ENCODE measurements at regions of chr1 and their contacts with region 1.

Region 1: GRCh38 chr1:205387845-205388244 is 31.1 kb upstream of the KLHDC8A start:
- DNase-seq: no peak

Region 2: GRCh38 chr1:205430696-205431305 is 43.0 kb after region 1 on chr1:
- intact Hi-C with region 1: loop called in 1 of 2 experiments (anchors 1 kb)
- DNase-seq: no peak

Region 3: DNA sequence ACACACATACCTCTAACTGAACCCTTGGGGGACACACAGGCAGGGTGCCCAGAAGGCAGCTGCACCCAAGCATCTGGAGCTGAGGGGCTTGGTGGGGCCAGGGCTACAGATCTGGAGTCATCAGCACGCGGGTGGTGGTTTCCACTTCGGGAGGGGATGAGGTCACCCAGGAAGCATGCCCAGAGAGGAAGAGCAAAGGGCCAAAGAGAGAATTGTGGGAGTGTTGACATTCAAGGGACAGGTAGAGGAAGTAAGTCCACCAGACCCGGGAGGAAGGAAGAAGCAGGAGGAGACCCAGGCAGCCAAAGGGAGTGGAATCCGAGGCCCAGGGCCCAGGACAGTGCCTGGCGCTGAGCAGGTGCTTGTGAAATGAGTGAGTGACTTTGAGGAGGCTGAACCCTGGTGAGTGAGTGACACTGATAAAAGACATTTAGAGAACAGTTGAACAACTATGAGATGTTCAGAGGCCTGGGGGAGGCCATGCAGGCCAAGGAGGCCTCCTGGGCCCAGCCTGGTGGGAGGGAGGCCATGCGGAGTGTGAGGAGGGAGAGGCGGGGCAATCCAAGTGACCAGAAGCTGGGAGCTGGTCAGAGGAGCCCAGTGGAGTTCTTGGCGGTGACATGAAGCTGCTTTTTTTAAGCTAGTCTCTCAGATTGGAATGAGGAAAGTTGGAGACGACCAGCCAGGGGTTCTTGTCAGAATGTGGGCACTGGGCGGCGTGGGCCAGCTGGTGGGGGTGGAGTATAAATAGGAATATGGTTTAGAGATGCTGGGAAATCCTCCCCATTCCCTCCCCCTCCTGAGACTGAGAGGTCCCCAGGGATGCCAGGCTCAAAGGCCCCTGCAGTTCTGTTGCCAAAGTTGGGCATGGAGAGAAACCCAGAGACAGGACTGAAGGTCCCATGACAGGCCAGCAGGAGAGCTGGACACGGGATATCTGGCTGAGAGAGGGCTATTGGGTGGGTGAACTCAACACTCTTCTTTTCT is 124.5 kb after region 1 on chr1:
- intact Hi-C with region 1: no loop called
- DNase-seq: no peak